A549 (cell line): ENCODE measurements at regions of chr19 and their contacts with region 1.

Region 1: GRCh38 chr19:51259348-51260245 is 8.7 kb downstream of the SIGLECL1 start:
- DNase-seq: peak; percentile 43 to 50
- ATAC-seq: peak; percentile 87; a peak in 5 of 6 replicates
- H3K4me3 ChIP-seq: no peak overlapping the region
- H3K27ac ChIP-seq: no peak overlapping the region
- H3K4me1 ChIP-seq: no peaks in the 10 kb centered on the region
- CTCF ChIP-seq: peak; percentile 56
- EP300 ChIP-seq: no peak
- POLR2A ChIP-seq: no peak
- RAD21 ChIP-seq: peak; percentile 52 to 76

Region 2: DNA sequence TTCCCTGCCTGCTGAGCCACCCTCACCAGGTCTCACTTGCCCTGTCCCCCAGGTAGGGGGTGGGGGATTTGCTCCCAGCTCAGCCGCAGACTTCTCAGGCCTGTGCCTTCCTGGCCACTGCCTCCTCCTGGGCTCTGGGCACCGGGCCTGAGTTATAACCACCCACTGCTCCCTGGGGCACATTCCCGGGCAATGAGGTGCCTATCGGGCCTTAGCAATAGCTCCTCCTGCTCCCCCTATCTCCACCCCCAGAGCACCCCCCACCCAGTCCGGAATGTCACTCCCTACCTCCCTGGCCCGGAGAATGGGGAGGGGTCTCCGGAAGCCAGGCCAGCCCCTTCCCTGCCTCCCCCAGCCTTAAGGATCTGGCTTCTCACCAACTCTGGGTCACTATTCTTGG is 306.7 kb before region 1 on chr19 and contains the start of gene KLK5:
- CTCF ChIA-PET with region 1: no interaction called
- POLR2A ChIA-PET with region 1: no interaction called
- DNase-seq: no peak
- ATAC-seq: peak; percentile 56 to 59
- H3K4me3 ChIP-seq: no peak within 1 kb of the TSS
- H3K27ac ChIP-seq: no peak within 1 kb of the TSS
- H3K4me1 ChIP-seq: no peaks in the 10 kb centered on the region
- CTCF ChIP-seq: no peak
- EP300 ChIP-seq: no peak
- POLR2A ChIP-seq: no peak
- RAD21 ChIP-seq: no peak
- polyA plus RNA-seq, gene KLK5: not detected in 2 replicates

Region 3: GRCh38 chr19:51246164-51246552 is 13.4 kb before region 1 on chr19:
- CTCF ChIA-PET with region 1: interaction called, 12 read pairs
- POLR2A ChIA-PET with region 1: no interaction called
- DNase-seq: no peak
- ATAC-seq: no peak
- H3K4me3 ChIP-seq: no peak overlapping the region
- H3K27ac ChIP-seq: no peak overlapping the region
- H3K4me1 ChIP-seq: no peaks in the 10 kb centered on the region
- CTCF ChIP-seq: no peak
- EP300 ChIP-seq: no peak
- POLR2A ChIP-seq: no peak
- RAD21 ChIP-seq: no peak

Region 4: GRCh38 chr19:51272183-51272810 is 12.7 kb after region 1 on chr19:
- CTCF ChIA-PET with region 1: interaction called, 12 read pairs
- POLR2A ChIA-PET with region 1: no interaction called
- DNase-seq: no peak
- ATAC-seq: no peak
- H3K4me3 ChIP-seq: no peak overlapping the region
- H3K27ac ChIP-seq: no peak overlapping the region
- H3K4me1 ChIP-seq: peaks cover 12% of the 10 kb centered on the region; the same call in 2 of the 3 replicates
- CTCF ChIP-seq: no peak
- EP300 ChIP-seq: no peak
- POLR2A ChIP-seq: no peak
- RAD21 ChIP-seq: no peak

Region 5: GRCh38 chr19:51301266-51301665 is 41.7 kb after region 1 on chr19:
- CTCF ChIA-PET with region 1: no interaction called
- POLR2A ChIA-PET with region 1: no interaction called
- DNase-seq: no peak
- ATAC-seq: no peak
- H3K4me3 ChIP-seq: no peak overlapping the region
- H3K27ac ChIP-seq: no peak overlapping the region
- H3K4me1 ChIP-seq: no peaks in the 10 kb centered on the region
- CTCF ChIP-seq: no peak
- EP300 ChIP-seq: no peak
- POLR2A ChIP-seq: no peak
- RAD21 ChIP-seq: no peak